SK-N-SH (cell line): ENCODE measurements at regions of chr3 and their contacts with region 1.

Region 1: DNA sequence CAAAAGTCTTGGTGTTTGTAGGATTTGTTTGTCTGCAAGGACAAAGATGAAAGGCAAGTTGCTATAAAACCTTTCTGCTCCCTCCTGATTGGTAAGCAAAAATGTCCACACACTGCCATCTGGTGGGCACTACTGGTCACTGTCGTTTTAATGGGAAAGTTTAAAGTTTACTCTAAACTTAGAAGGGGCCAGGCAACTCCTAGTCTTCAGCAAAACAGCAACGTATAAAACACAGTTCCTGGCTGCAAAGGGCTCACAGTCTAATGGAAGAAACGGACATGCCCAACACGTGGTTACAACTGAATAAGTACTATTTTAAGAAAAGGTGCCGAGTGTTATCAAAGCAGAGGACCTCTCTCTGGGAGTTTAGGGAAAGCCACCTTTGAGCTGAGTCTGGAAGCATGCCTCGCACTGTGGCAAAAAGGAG is 23.7 kb upstream of the TPRG1 start:
- DNase-seq: peak; percentile 52
- H3K4me3 ChIP-seq: no peak overlapping the region; a peak in 1 of 4 replicates
- H3K27ac ChIP-seq: no peak overlapping the region
- H3K4me1 ChIP-seq: peaks cover 0 to 3% of the 10 kb centered on the region in 2 experiments; a peak in 1 of 4 replicates
- H3K27me3 ChIP-seq: no peaks in the 10 kb centered on the region; the same call in 1 of the 2 replicates
- CTCF ChIP-seq: peak; percentile 83
- EP300 ChIP-seq: no peak
- RAD21 ChIP-seq: peak; percentile 95

Region 2: DNA sequence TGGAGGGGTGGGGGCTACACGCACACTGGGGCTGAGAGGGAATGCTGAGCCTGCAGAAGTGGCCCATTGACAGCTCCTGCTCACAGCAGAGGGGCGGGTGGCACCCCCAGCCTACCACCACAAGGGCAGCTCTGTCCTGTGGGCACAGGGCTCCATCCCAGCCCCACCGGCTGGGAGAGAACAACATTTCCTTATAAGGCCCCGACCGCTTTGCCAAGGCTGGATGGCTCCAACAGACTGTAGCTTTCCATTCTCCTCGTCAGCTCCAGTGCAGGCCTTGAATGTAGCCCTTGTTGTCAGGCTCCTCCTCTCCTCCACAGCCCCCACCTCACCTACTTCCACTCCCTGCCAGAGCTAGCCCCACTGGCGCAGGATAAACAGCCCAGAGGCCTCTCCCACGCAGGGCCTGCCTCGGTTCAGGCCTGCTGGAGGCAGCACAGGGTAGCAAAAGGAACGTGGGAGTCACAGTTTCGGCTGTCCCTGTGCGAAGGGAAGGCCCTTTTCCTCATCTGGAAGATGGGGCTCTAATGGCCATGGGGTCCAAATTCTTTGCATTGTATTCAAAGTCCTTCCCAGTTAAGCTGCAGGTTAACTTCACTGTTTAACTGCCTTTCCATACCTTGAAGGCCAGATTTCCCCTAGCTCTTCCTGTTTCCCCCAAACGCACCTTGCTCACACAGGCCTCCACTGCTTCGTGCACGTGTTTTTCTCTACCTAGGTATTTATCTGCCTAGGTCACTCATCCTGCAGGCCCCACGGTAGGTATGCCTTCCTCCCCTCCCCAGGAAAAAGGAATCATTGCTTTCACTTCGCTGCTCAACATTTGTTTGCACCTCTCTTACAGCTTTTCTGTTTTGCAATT is 1095.7 kb before region 1 on chr3:
- CTCF ChIA-PET with region 1: no interaction called
- POLR2A ChIA-PET with region 1: no interaction called
- DNase-seq: no peak
- H3K4me3 ChIP-seq: no peak overlapping the region
- H3K27ac ChIP-seq: no peak overlapping the region
- H3K4me1 ChIP-seq: peaks cover 0 to 17% of the 10 kb centered on the region in 2 experiments; a peak in 2 of 4 replicates
- H3K27me3 ChIP-seq: no peaks in the 10 kb centered on the region
- CTCF ChIP-seq: peak; percentile 24
- EP300 ChIP-seq: no peak
- RAD21 ChIP-seq: no peak

Region 3: GRCh38 chr3:188830893-188831292 is 317.2 kb before region 1 on chr3:
- CTCF ChIA-PET with region 1: interaction called, 17 read pairs
- POLR2A ChIA-PET with region 1: no interaction called
- DNase-seq: peak; percentile 8
- H3K4me3 ChIP-seq: no peak overlapping the region
- H3K27ac ChIP-seq: no peak overlapping the region
- H3K4me1 ChIP-seq: peaks cover 0 to 9% of the 10 kb centered on the region in 2 experiments; a peak in 2 of 4 replicates
- H3K27me3 ChIP-seq: no peaks in the 10 kb centered on the region
- CTCF ChIP-seq: peak; percentile 49
- EP300 ChIP-seq: no peak
- RAD21 ChIP-seq: peak; percentile 34; the same call in 1 of the 2 replicates

Region 4: DNA sequence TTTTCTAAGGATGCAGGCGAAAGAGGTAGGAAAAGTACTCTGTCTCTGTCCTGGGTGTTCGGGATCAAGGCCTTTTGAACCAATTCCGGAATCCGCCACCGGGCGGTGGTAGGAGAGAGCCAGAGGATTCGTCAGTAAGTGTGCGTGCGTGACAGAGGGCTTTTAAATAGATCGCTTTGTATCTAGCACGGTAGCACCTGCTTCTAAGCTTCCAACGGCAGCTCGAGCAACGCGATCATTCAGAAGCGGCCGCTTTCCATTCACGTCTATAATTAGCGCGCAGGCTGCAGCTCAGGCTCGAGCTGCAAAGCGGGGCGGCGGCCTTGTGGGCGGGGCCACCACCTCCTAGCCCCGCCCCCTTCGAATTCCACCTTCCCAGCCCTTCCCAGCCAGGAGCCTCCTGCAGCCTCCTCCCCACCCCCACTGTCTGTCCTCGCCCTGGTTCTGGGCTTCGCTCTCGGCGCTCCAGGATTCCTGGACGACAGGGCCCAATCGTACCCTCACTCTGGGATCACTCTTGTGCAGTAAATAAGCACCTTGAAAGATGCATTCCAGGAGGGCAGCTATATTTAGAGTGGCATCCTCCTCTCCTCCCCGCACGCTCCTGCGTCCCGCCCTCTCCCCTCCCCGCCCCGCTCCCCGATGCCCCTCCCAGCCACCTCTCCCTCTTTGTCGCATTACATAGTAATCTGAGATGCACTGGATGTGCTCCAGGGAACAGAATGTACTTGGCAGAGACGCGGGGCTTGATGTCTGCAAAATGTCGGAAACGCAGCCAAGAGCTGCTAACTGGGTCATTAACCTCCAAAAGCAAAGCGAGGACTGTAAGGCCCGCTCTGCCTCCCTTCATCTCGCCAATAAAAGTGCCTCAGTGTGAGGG is 200.5 kb before region 1 on chr3:
- CTCF ChIA-PET with region 1: interaction called, 10 read pairs
- POLR2A ChIA-PET with region 1: no interaction called
- DNase-seq: peak; percentile 86
- H3K4me3 ChIP-seq: peak overlapping the region; percentile 51 to 61
- H3K27ac ChIP-seq: peak overlapping the region; percentile 85 to 93
- H3K4me1 ChIP-seq: peaks cover 24 to 30% of the 10 kb centered on the region in 2 experiments; a peak in 3 of 4 replicates
- H3K27me3 ChIP-seq: no peaks in the 10 kb centered on the region
- CTCF ChIP-seq: peak; percentile 56
- EP300 ChIP-seq: peak; percentile 36 to 60; a peak in 2 of 4 replicates
- RAD21 ChIP-seq: peak; percentile 61

Region 5: DNA sequence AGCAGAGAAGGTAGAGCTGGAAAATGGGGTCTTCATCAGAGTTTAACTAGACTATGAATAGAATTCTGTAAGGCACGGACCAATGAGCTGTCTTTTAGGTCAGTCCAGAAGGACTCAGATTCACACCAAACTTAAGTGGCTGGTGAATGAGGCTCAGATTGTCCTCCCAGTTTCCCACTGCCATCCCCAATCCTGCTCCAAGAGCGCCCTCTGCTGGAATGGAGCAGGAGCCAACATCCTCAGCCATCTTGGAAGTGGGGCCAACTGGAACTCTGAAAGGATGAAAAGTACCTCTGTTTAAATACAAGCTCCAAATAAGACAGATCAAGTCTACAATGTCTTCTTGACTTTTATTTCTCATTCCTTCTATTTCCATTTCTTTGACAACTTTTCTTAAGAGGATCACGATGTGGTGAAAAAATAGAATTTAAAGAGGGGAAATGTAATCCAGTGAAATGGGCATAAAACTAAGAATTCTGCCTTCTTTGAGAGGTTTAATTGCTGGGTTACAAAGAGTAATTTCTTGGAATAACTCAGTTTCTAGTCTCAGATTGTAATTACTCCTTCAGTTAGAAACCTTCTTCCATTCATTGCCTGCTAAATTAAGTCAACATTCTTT is 193.4 kb before region 1 on chr3:
- CTCF ChIA-PET with region 1: interaction called, 23 read pairs
- POLR2A ChIA-PET with region 1: interaction called, 3 read pairs
- DNase-seq: peak; percentile 52
- H3K4me3 ChIP-seq: peak overlapping the region in 1 of 2 experiments; percentile 26; a peak in 1 of 4 replicates
- H3K27ac ChIP-seq: peak overlapping the region in 1 of 2 experiments; percentile 14; a peak in 1 of 4 replicates
- H3K4me1 ChIP-seq: peaks cover 2 to 13% of the 10 kb centered on the region in 2 experiments; a peak in 3 of 4 replicates
- H3K27me3 ChIP-seq: no peaks in the 10 kb centered on the region
- CTCF ChIP-seq: peak; percentile 97
- EP300 ChIP-seq: no peak
- RAD21 ChIP-seq: peak; percentile 88

Region 6: GRCh38 chr3:189133768-189134167 is 14.3 kb before region 1 on chr3:
- CTCF ChIA-PET with region 1: interaction called, 13 read pairs
- POLR2A ChIA-PET with region 1: no interaction called
- DNase-seq: no peak
- H3K4me3 ChIP-seq: no peak overlapping the region
- H3K27ac ChIP-seq: no peak overlapping the region
- H3K4me1 ChIP-seq: peaks cover 6 to 8% of the 10 kb centered on the region in 2 experiments; a peak in 2 of 4 replicates
- H3K27me3 ChIP-seq: no peaks in the 10 kb centered on the region; the same call in 1 of the 2 replicates
- CTCF ChIP-seq: no peak
- EP300 ChIP-seq: no peak
- RAD21 ChIP-seq: no peak